K562 (cell line): ENCODE measurements at regions of chr2 and their contacts with region 1.

Region 1: DNA sequence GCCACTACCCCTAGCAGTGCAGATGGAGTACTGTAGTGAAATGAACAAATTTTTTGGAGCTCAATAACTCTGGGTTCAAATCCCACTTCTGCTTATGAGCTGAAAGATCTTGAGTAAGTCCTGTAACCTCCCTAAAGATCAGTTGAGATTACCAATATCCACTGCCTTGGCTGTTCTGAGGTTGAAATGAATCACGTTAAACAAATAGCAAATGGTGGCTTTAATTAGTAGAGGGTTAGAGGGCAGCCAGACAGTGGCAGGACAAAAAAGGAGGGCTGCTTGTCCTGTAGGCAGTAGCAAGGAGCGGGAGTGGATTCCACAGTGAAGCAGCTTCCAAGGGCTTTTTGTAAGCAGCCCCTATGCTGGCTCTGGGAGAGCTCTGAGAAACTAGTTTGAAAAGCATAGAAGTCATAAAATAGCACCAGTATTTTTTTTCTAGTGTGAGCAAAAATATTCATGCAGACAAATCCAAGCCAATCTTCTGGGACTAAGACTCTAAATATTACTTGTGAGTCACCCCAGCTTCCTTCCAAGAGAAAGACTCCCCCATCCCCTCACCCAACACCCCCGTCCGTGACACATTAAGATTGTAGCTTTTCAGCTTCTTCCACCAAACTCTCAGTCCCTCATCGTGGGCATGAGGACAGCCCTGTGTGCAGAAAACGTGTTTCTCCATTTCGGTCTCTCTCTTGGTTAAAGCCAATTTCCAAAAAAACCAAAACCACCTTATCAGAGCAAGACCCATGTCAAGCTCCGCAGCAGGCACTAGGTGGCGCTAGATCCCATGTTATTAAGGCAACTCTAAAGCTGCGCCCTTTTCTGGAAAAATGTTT is 123.5 kb upstream of the LGALSL start:
- DNase-seq: peak; percentile 61 to 86 (median 64)
- ATAC-seq: peak; percentile 91
- H3K4me3 ChIP-seq: no peak overlapping the region
- H3K27ac ChIP-seq: no peak overlapping the region
- H3K4me1 ChIP-seq: no peaks in the 10 kb centered on the region
- H3K27me3 ChIP-seq: peaks cover 19 to 43% of the 10 kb centered on the region in 2 experiments
- CTCF ChIP-seq: peak; percentile 80 to 93 (median 88)
- EP300 ChIP-seq: no peak
- POLR2A ChIP-seq: no peak
- RAD21 ChIP-seq: peak; percentile 92 to 96

Region 2: GRCh38 chr2:64052468-64053241 is 277.8 kb before region 1 on chr2:
- CTCF ChIA-PET with region 1: no interaction called
- POLR2A ChIA-PET with region 1: no interaction called
- in situ Hi-C with region 1: loop called (anchors 10 kb)
- intact Hi-C with region 1: loop called (anchors 2 kb)
- DNase-seq: no peak
- ATAC-seq: no peak
- H3K4me3 ChIP-seq: no peak overlapping the region
- H3K27ac ChIP-seq: no peak overlapping the region
- H3K4me1 ChIP-seq: no peaks in the 10 kb centered on the region
- H3K27me3 ChIP-seq: no peaks in the 10 kb centered on the region; a peak in 1 of 5 replicates
- CTCF ChIP-seq: no peak
- EP300 ChIP-seq: no peak
- POLR2A ChIP-seq: no peak
- RAD21 ChIP-seq: no peak

Region 3: GRCh38 chr2:64562148-64562784 is 231.8 kb after region 1 on chr2:
- CTCF ChIA-PET with region 1: no interaction called
- POLR2A ChIA-PET with region 1: no interaction called
- in situ Hi-C with region 1: no loop called
- intact Hi-C with region 1: loop called (anchors 1 kb)
- DNase-seq: no peak
- ATAC-seq: no peak
- H3K4me3 ChIP-seq: no peak overlapping the region
- H3K27ac ChIP-seq: no peak overlapping the region
- H3K4me1 ChIP-seq: no peaks in the 10 kb centered on the region
- H3K27me3 ChIP-seq: no peaks in the 10 kb centered on the region
- CTCF ChIP-seq: peak in 2 of 3 experiments; percentile 12 to 51; a peak in 3 of 6 replicates
- EP300 ChIP-seq: no peak
- POLR2A ChIP-seq: no peak
- RAD21 ChIP-seq: peak in 1 of 2 experiments; percentile 21; a peak in 2 of 4 replicates

Region 4: GRCh38 chr2:64586883-64587481 is 256.5 kb after region 1 on chr2:
- CTCF ChIA-PET with region 1: no interaction called
- POLR2A ChIA-PET with region 1: no interaction called
- in situ Hi-C with region 1: no loop called
- intact Hi-C with region 1: loop called (anchors 5 kb)
- DNase-seq: peak; percentile 23 to 52 (median 37)
- ATAC-seq: peak; percentile 74
- H3K4me3 ChIP-seq: no peak overlapping the region
- H3K27ac ChIP-seq: no peak overlapping the region
- H3K4me1 ChIP-seq: no peaks in the 10 kb centered on the region
- H3K27me3 ChIP-seq: no peaks in the 10 kb centered on the region
- CTCF ChIP-seq: peak; percentile 60 to 75 (median 71); a peak in 5 of 6 replicates
- EP300 ChIP-seq: no peak
- POLR2A ChIP-seq: no peak
- RAD21 ChIP-seq: peak; percentile 76 to 85

Region 5: DNA sequence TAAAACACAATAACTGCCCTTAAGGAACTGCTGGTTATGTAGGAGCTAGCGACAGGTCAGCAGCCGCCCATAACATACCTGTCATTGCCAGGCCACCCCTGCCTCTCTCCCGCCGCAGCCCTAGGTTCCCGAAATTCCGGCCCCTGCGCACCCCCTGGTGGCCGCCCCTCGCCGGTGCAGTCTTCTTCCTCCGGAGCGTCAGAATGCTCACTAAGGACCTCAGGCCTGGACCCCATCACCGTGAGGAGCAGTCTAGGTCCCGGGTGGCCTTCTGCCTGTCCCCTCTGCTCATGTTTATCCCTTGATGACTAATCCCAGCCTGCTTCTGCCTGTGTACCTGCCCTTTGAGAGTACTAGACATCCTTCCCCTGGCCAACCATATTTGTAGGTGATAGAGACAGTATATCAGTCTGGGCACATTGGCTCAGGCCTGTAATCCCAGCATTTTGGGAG is 543.0 kb after region 1 on chr2:
- CTCF ChIA-PET with region 1: interaction called, 4 read pairs
- POLR2A ChIA-PET with region 1: no interaction called
- in situ Hi-C with region 1: loop called (anchors 10 kb)
- intact Hi-C with region 1: loop called (anchors 5 kb)
- DNase-seq: peak; percentile 77 to 86 (median 84)
- ATAC-seq: peak; percentile 95
- H3K4me3 ChIP-seq: no peak overlapping the region
- H3K27ac ChIP-seq: no peak overlapping the region
- H3K4me1 ChIP-seq: peaks cover 7 to 14% of the 10 kb centered on the region in 2 experiments; a peak in 4 of 5 replicates
- H3K27me3 ChIP-seq: no peaks in the 10 kb centered on the region
- CTCF ChIP-seq: peak; percentile 89 to 96 (median 91)
- EP300 ChIP-seq: no peak
- POLR2A ChIP-seq: no peak
- RAD21 ChIP-seq: peak; percentile 82 to 94